Ascending aorta (tissue), 2 donors: ENCODE measurements at regions of chr1 and their contacts with region 1.

Region 1: DNA sequence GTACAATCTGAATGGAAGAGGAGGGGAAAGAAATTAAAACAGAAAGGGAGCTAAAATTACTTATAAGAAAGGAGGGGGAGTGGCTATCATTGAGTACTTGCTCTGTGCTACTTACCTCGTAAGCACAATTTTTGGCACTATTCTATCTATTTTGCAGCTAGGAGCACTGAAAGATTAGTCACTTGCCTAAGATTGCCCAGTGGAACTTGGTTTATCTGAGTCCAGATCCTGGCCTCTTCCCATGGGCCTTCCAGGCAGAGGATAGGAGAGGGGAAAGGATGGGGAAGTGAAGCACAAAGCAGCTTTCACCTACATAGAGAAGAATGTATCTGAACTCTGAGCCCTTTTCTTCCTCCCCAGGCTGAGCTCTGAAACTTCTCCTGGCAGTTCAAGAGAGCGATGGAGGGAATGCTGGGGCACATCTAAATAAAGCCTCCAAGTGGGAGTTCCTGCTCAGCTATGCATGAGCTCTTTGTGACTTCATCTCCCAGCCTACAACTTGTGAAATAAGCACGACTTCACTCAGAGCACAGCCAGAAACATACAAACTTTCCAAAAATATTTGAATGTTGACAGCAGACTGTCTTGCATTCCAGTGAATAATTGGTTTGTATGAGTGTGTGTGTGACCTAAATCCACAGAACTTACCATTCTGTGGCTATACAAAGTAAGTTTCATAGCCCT is 29.4 kb downstream of the HMGB4 start:
- DNase-seq: peak in 1 of 2 donors; percentile 79
- H3K4me3 ChIP-seq: no peak overlapping the region
- H3K27ac ChIP-seq: peak overlapping the region; percentile 91 to 93
- H3K4me1 ChIP-seq: peaks cover 6 to 16% of the 10 kb centered on the region in 2 donors
- H3K27me3 ChIP-seq: no peaks in the 10 kb centered on the region
- CTCF ChIP-seq: no peak

Region 2: DNA sequence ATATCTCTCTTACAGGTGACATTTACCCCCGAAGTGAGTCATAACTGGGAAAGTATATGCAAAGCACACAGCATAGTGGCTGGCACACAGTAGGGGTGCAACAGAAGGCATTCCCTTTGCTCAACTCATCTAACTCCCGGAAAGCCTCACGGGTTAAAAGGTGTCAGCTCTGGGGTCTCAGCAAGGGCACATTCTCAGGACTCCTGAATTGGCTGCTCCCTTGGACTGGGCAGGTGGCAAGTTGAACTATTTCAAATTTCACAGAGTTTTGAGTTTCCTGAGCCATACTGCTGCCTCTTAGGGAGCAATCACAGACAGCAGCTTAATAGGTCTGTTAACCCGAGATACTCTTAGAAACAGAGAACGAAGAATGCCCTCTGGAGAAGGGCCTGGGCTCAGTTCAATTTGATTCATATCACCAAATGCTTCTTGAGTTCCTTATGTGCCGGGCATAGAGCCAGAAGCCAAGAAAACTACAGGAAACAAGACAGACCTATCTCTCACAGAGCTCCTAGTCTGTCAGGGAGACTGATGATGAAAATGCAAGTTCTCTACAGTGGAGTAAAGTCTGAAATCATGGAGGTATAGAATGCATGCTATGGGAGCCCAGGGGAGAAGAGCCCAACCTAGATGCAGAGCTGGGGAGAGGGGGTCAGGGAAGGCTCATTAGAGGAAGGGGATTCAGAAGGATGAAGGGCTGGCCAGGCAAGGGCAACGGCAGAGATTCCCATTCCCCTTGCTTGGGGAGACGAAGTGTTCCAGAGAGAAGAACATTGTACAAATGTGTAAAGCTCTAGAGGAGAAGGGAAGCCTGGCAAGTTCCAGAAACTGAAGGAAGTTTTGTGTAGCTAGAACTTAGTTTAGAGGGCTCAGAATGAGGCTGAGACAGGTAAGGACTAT is 173.3 kb before region 1 on chr1:
- intact Hi-C with region 1: no loop called
- DNase-seq: no peak
- H3K4me3 ChIP-seq: no peak overlapping the region
- H3K27ac ChIP-seq: no peak overlapping the region
- H3K4me1 ChIP-seq: no peaks in the 10 kb centered on the region
- H3K27me3 ChIP-seq: no peaks in the 10 kb centered on the region
- CTCF ChIP-seq: no peak

Region 3: DNA sequence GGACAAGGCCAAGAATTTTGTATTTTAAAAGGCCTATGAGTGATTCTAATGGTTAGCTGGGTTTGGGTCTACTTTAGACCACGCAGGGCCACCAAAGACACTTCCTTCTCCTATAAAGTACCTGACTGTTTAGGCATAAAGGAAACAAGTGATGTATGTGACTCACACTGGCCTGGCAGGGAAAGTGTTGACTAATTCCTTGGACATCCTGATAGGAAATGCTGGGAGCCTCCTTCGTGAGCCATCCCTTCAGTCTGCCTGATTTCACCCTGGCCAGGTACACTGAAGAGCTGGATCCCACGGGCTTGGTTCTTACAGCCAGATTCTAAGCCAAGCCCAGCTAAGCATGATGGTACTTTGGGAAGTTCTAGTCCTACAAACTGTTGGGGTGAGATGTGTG is 129.9 kb before region 1 on chr1:
- intact Hi-C with region 1: loop called (anchors 5 kb)
- DNase-seq: peak in 1 of 2 donors; percentile 43
- H3K4me3 ChIP-seq: no peak overlapping the region
- H3K27ac ChIP-seq: peak overlapping the region in 1 of 2 donors; percentile 80
- H3K4me1 ChIP-seq: peaks cover 5 to 31% of the 10 kb centered on the region in 2 donors
- H3K27me3 ChIP-seq: no peaks in the 10 kb centered on the region
- CTCF ChIP-seq: no peak

Region 4: GRCh38 chr1:34426325-34426891 is 533.1 kb after region 1 on chr1:
- intact Hi-C with region 1: no loop called
- DNase-seq: no peak
- H3K4me3 ChIP-seq: no peak overlapping the region
- H3K27ac ChIP-seq: no peak overlapping the region
- H3K4me1 ChIP-seq: no peaks in the 10 kb centered on the region
- H3K27me3 ChIP-seq: no peaks in the 10 kb centered on the region
- CTCF ChIP-seq: no peak